ENCODE measurements at regions of chr3 and their contacts with region 1.

Region 1: DNA sequence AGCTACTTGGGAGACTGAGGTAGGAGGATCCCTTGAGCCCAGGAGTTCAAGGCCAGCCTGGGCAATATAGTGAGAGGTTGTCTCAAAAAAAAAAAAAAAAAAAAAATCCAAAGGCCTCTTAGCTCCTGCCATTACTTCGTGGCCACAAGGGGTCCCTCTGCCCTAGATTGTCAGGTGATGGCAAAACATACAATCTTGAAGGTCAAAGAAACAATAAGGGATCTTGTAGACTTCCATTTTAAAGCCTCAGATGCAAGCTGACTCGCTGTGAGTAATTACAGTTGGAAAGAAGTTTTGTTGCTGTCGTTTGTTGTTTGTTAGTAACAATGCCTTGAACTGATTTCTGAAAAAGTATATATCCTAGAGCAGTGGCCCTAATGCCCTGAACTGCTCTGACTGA is 55.9 kb upstream of the PLCL2 start:
- DNase-seq: peak; percentile 55
- ATAC-seq: peak; percentile 82
- H3K4me3 ChIP-seq: no peak overlapping the region
- H3K27ac ChIP-seq: no peak overlapping the region
- H3K4me1 ChIP-seq: peaks cover 0 to 5% of the 10 kb centered on the region in 2 experiments; a peak in 1 of 4 replicates
- H3K27me3 ChIP-seq: no peaks in the 10 kb centered on the region
- CTCF ChIP-seq: peak; percentile 60 to 66 (median 61); a peak in 5 of 6 replicates
- POLR2A ChIP-seq: no peak
- RAD21 ChIP-seq: peak; percentile 71

Region 2: DNA sequence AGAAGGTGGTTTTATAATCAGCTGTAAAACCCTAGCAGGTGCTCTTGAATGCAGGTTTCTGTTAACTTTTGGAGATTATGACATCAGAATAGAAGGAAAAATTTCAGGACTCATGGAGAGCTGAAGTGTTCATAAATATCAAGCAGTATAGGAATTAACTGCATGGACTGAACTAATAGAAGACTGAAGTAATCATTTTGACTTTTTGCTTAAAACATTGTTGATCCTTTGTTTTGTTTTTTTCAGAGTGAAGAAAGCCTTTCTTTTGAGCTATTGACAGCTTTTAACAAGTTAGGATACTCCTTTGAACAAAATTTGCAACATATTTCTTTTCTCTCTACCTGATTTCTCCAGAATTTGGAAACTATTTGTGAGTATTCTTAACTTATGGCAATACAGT is 153.0 kb before region 1 on chr3:
- CTCF ChIA-PET with region 1: no interaction called
- POLR2A ChIA-PET with region 1: no interaction called
- RAD21 ChIA-PET with region 1: no interaction called
- intact Hi-C with region 1: no loop called
- DNase-seq: no peak
- ATAC-seq: no peak
- H3K4me3 ChIP-seq: no peak overlapping the region
- H3K27ac ChIP-seq: no peak overlapping the region
- H3K4me1 ChIP-seq: no peaks in the 10 kb centered on the region
- H3K27me3 ChIP-seq: no peaks in the 10 kb centered on the region
- CTCF ChIP-seq: no peak
- POLR2A ChIP-seq: no peak
- RAD21 ChIP-seq: no peak

Region 3: GRCh38 chr3:17149031-17149430 is 320.2 kb after region 1 on chr3:
- CTCF ChIA-PET with region 1: no interaction called
- POLR2A ChIA-PET with region 1: no interaction called
- RAD21 ChIA-PET with region 1: no interaction called
- intact Hi-C with region 1: loop called (anchors 5 kb)
- DNase-seq: no peak
- ATAC-seq: no peak
- H3K4me3 ChIP-seq: no peak overlapping the region
- H3K27ac ChIP-seq: no peak overlapping the region
- H3K4me1 ChIP-seq: no peaks in the 10 kb centered on the region
- H3K27me3 ChIP-seq: no peaks in the 10 kb centered on the region
- CTCF ChIP-seq: no peak
- POLR2A ChIP-seq: no peak
- RAD21 ChIP-seq: no peak

Region 4: GRCh38 chr3:17233398-17233800 is 404.6 kb after region 1 on chr3:
- CTCF ChIA-PET with region 1: interaction called, 7 read pairs
- POLR2A ChIA-PET with region 1: no interaction called
- RAD21 ChIA-PET with region 1: no interaction called
- intact Hi-C with region 1: loop called (anchors 1 kb)
- DNase-seq: peak; percentile 52
- ATAC-seq: peak; percentile 99
- H3K4me3 ChIP-seq: no peak overlapping the region
- H3K27ac ChIP-seq: no peak overlapping the region
- H3K4me1 ChIP-seq: no peaks in the 10 kb centered on the region
- H3K27me3 ChIP-seq: no peaks in the 10 kb centered on the region
- CTCF ChIP-seq: peak; percentile 59 to 79 (median 75)
- POLR2A ChIP-seq: no peak
- RAD21 ChIP-seq: peak; percentile 85